Transverse colon (tissue), 4 donors: ENCODE measurements at regions of chr11 and their contacts with region 1.

Region 1: GRCh38 chr11:75802913-75803820 is 11.8 kb upstream of the UVRAG start:
- DNase-seq: peak; percentile 83
- H3K4me3 ChIP-seq: no peak overlapping the region
- H3K27ac ChIP-seq: no peak overlapping the region
- H3K4me1 ChIP-seq: no peaks in the 10 kb centered on the region
- H3K27me3 ChIP-seq: no peaks in the 10 kb centered on the region
- CTCF ChIP-seq: peak; percentile 89 to 92 (median 90)
- EP300 ChIP-seq: no peak
- POLR2A ChIP-seq: no peak

Region 2: DNA sequence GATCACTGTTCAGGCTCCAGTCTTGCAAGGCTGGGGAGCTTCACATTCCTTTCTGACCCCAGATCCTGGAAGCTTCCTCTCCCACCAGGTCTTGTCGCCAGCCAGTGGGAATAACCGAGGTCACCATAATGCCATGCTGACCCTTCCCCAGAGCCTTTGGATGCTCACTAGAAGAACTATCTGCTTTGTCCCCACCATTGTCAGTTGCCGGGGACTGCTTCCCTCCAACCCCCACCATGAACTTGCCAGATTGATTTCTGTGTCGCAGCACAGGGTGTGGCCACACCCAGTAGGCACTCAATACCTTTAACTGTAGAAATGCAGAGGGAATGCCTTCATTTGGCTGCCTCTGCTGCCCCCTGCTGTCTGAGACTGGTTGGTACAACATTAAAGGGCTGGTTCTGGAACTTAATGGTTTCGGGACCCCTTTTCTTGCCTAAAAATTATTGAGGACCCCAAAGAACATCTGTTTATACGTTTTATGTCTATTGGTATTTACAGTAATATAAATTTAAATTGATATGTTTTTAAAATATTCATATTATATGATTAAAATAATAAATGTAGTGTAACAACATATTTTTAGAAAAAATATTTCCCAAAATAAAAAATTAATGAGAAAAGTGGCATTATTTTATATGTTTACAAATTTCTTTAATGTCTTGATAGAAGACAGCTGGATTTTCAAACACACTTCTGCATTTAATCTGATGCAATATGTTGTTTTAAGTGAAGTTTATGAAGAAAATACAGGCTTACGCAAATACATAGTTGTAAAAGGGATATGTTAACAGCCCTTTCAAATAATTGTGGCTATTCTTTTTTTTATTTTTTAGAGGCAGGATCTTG is 270.7 kb before region 1 on chr11:
- in situ Hi-C with region 1: no loop called
- intact Hi-C with region 1: no loop called
- DNase-seq: peak; percentile 80
- H3K4me3 ChIP-seq: no peak overlapping the region
- H3K27ac ChIP-seq: no peak overlapping the region
- H3K4me1 ChIP-seq: peaks cover 0 to 10% (median 2%) of the 10 kb centered on the region in 4 donors
- H3K27me3 ChIP-seq: no peaks in the 10 kb centered on the region
- CTCF ChIP-seq: peak; percentile 92 to 96 (median 93)
- EP300 ChIP-seq: no peak
- POLR2A ChIP-seq: no peak

Region 3: GRCh38 chr11:75673977-75674582 is 129.1 kb before region 1 on chr11:
- in situ Hi-C with region 1: no loop called
- intact Hi-C with region 1: no loop called
- DNase-seq: no peak
- H3K4me3 ChIP-seq: no peak overlapping the region
- H3K27ac ChIP-seq: no peak overlapping the region
- H3K4me1 ChIP-seq: peaks cover 0 to under 1% (median under 1%) of the 10 kb centered on the region in 4 donors
- H3K27me3 ChIP-seq: peaks cover 66% of the 10 kb centered on the region
- CTCF ChIP-seq: no peak
- EP300 ChIP-seq: no peak
- POLR2A ChIP-seq: no peak

Region 4: GRCh38 chr11:75759832-75760231 is 43.3 kb before region 1 on chr11:
- in situ Hi-C with region 1: no loop called
- intact Hi-C with region 1: no loop called
- DNase-seq: no peak
- H3K4me3 ChIP-seq: no peak overlapping the region
- H3K27ac ChIP-seq: no peak overlapping the region
- H3K4me1 ChIP-seq: no peaks in the 10 kb centered on the region
- H3K27me3 ChIP-seq: no peaks in the 10 kb centered on the region
- CTCF ChIP-seq: no peak
- EP300 ChIP-seq: no peak
- POLR2A ChIP-seq: no peak

Region 5: GRCh38 chr11:76152086-76152681 is 349.0 kb after region 1 on chr11:
- in situ Hi-C with region 1: no loop called
- intact Hi-C with region 1: loop called (anchors 2 kb)
- DNase-seq: peak; percentile 89
- H3K4me3 ChIP-seq: peak overlapping the region in 3 of 4 donors; percentile 14 to 36 (median 19)
- H3K27ac ChIP-seq: peak overlapping the region in 3 of 4 donors; percentile 17 to 90 (median 83)
- H3K4me1 ChIP-seq: peaks cover 13 to 48% (median 31%) of the 10 kb centered on the region in 4 donors
- H3K27me3 ChIP-seq: no peaks in the 10 kb centered on the region
- CTCF ChIP-seq: peak; percentile 89 to 98 (median 93)
- EP300 ChIP-seq: no peak
- POLR2A ChIP-seq: no peak

Region 6: GRCh38 chr11:77003954-77004353 is 1200.8 kb after region 1 on chr11:
- in situ Hi-C with region 1: no loop called
- intact Hi-C with region 1: no loop called
- DNase-seq: no peak
- H3K4me3 ChIP-seq: no peak overlapping the region
- H3K27ac ChIP-seq: no peak overlapping the region
- H3K4me1 ChIP-seq: peaks cover 0 to 25% (median 8%) of the 10 kb centered on the region in 4 donors
- H3K27me3 ChIP-seq: no peaks in the 10 kb centered on the region
- CTCF ChIP-seq: no peak
- EP300 ChIP-seq: no peak
- POLR2A ChIP-seq: no peak